BJ (cell line): ENCODE measurements at regions of chr22 and their contacts with region 1.

Region 1: GRCh38 chr22:37979782-37980181 is 4.6 kb downstream of the SOX10 start:
- DNase-seq: no peak
- H3K4me3 ChIP-seq: no peak overlapping the region
- H3K27me3 ChIP-seq: no peaks in the 10 kb centered on the region
- CTCF ChIP-seq: no peak

Region 2: GRCh38 chr22:37953437-37954179 is 26.2 kb before region 1 on chr22 and contains the starts of genes C22orf23 and POLR2F:
- CTCF ChIA-PET with region 1: no interaction called
- POLR2A ChIA-PET with region 1: no interaction called
- DNase-seq: peak; percentile 67
- H3K4me3 ChIP-seq: peak within 1 kb of the TSS; percentile 100
- H3K27me3 ChIP-seq: no peaks in the 10 kb centered on the region
- CTCF ChIP-seq: no peak
- polyA plus RNA-seq, gene C22orf23: 0.38 and 0.42 TPM in 2 replicates
- polyA plus RNA-seq, gene POLR2F: 86.2 and 92.1 TPM in 2 replicates

Region 3: GRCh38 chr22:37965940-37966664 is 13.7 kb before region 1 on chr22:
- CTCF ChIA-PET with region 1: interaction called, 10 read pairs
- POLR2A ChIA-PET with region 1: no interaction called
- DNase-seq: no peak
- H3K4me3 ChIP-seq: no peak overlapping the region
- H3K27me3 ChIP-seq: no peaks in the 10 kb centered on the region
- CTCF ChIP-seq: no peak